ENCODE measurements at regions of chr1 and their contacts with region 1.

Region 1: DNA sequence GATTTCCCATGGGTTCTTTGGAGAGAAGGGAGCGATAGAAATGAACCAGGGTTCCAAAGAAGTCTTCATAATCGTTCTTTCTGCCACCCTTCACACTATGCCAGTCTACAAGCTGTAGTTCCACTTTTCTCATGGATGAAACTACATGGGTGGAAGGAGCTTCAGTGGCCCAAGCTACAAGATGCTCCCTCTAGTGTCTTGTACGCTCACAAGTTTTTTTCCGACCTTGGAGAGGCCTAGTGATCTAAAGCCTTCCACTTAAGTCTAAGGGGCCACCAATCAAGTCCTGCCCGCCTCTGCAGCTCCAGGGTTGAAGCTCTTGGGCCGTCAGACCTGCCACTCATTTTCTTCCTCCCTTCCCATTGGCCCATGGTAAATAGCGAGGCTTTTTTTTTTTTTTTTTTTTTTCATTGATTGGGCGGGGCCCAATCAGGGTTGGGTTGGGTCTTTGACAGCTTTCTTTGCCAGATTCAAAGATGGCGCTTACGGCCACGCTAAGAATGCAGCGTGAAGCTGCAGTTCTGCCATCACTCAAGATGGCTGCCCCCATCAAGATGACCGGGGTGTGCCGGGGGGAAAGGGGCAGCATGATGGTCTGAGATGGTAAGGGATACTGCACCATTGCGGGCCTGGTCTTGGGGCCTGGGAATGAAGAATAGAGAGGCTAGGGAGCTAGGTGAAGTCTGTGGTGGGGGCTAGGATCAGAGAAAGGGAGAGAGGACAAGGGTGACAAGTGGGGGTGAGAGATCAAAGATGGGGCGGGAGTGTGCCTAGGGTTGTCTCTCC is at the start of gene TOMM40L:
- DNase-seq: peak; percentile 90 to 94
- H3K4me3 ChIP-seq: peak within 1 kb of the TSS; percentile 12 to 66 (median 56)
- H3K27ac ChIP-seq: peak within 1 kb of the TSS in 2 of 3 donors; percentile 49 to 53
- H3K4me1 ChIP-seq: peaks cover 16 to 19% of the 10 kb centered on the region in 2 donors
- H3K27me3 ChIP-seq: no peaks in the 10 kb centered on the region
- CTCF ChIP-seq: peak in 5 of 6 experiments; percentile 12 to 55 (median 48)
- POLR2A ChIP-seq: peak in 1 of 2 donors; percentile 34
- total RNA-seq, gene TOMM40L: 7.0 to 12.4 (median 8.3) TPM

Region 2: DNA sequence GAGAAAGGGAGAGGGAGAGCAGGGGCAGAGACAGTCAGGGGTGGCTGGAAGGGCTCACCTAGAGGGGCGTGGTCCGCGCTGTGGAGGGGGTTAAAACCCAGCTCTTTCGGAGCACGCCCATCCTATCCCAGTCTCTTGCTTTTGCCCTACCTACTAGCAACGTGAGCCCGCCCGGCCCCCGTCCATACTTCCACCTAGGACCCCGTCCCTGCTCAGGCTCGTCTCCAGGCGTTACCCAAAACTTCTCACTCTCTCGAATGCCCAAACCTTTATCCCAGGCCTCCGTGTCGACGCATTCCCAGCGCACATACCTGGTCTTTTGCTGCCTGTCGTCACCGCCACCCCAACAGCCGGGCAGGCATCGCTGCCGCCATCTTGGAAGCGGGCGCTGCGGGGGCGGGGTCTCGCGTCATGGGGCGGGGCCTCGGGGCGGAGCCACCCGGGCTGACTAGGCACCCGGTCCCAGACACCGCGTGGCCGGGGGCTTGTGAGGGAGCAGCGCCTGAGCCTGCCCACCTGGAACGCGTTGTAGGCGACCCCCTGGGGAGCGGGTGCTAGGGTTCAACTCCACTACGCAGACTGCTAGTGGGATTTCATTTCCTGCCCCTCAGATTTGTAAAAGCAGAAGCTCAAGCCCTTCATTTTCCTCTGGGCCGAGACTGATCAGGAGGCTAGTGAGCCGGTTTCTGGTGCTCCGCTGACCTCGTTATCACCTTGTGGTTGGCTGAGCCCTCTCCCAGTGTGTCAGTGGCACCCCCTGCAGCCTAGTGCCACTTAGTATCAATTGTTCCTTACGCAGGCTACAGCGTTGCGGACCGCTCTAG is 48.4 kb before region 1 on chr1 and contains the start of gene B4GALT3:
- intact Hi-C with region 1: loop called (anchors 10 kb)
- DNase-seq: peak; percentile 86 to 88
- H3K4me3 ChIP-seq: peak within 1 kb of the TSS; percentile 65 to 98 (median 85)
- H3K27ac ChIP-seq: peak within 1 kb of the TSS; percentile 83 to 93 (median 91)
- H3K4me1 ChIP-seq: peaks cover 8 to 25% of the 10 kb centered on the region in 2 donors
- H3K27me3 ChIP-seq: no peaks in the 10 kb centered on the region
- CTCF ChIP-seq: peak in 2 of 6 experiments; percentile 12 to 28
- POLR2A ChIP-seq: peak; percentile 63 to 69
- total RNA-seq, gene B4GALT3: 24.1 to 34.0 (median 29.2) TPM

Region 3: DNA sequence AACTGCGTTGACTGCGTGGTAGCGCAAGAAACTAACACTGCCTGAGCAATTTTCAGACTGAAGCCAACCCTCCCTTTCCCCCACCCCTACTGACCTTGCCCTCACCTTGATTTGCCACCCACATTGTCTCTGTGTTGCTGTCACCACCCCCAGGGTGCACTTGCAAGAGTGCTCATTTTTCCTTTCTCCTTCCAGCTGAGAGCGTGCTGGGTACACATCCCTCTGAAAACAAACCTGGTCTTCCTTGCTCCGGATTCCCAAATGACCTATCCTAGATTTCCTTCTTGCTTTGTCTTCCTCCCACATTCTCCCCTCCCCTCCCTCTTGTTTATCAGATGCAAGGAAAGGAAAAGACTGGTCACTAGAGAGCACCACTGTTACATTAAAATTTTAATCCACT is 59.8 kb after region 1 on chr1:
- intact Hi-C with region 1: no loop called
- DNase-seq: no peak
- H3K4me3 ChIP-seq: no peak overlapping the region
- H3K27ac ChIP-seq: no peak overlapping the region
- H3K4me1 ChIP-seq: peaks cover 0 to 2% of the 10 kb centered on the region in 2 donors
- H3K27me3 ChIP-seq: no peaks in the 10 kb centered on the region
- CTCF ChIP-seq: no peak
- POLR2A ChIP-seq: no peak

Region 4: DNA sequence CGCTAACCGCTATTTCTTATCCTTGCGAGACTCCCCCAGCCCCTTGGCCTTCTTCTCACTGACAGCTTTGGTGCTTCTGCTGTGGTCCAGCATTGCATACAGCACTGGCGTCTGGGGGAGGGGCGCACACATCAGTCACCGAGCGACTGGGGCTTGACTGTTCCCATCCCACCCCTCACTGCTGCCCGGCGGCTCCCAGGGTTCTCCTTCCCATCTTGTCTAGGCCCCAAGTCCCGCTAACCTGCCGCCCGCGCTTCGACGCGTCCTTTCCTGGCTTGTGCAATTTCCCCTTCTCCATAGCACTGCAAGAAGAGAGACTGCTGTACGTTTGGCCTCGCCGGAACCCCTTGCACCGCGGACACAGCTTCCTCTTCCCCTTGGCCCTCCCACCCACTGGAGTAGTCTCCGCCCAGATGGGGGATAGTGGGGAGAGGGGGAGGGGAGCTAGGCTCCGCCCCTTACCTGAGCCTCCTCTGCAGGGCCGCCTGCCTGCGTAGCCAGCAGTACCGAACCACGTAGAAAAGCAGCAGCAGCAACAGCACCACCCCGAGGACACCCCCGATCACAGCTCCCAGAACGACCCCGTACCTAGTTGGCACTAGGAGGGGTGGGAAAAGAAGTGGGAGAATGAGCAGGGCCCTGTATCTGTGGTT is 80.3 kb after region 1 on chr1:
- intact Hi-C with region 1: loop called (anchors 5 kb)
- DNase-seq: peak; percentile 85 to 87
- H3K4me3 ChIP-seq: peak overlapping the region; percentile 45 to 73 (median 73)
- H3K27ac ChIP-seq: peak overlapping the region; percentile 25 to 81 (median 73)
- H3K4me1 ChIP-seq: peaks cover 15 to 20% of the 10 kb centered on the region in 2 donors
- H3K27me3 ChIP-seq: no peaks in the 10 kb centered on the region
- CTCF ChIP-seq: peak in 3 of 6 experiments; percentile 12 to 26 (median 14)
- POLR2A ChIP-seq: peak in 1 of 2 donors; percentile 67

Region 5: GRCh38 chr1:161357073-161357472 is 131.3 kb after region 1 on chr1:
- intact Hi-C with region 1: no loop called
- DNase-seq: no peak
- H3K4me3 ChIP-seq: no peak overlapping the region
- H3K27ac ChIP-seq: no peak overlapping the region
- H3K4me1 ChIP-seq: no peaks in the 10 kb centered on the region
- H3K27me3 ChIP-seq: no peaks in the 10 kb centered on the region
- CTCF ChIP-seq: no peak
- POLR2A ChIP-seq: no peak

Region 6: GRCh38 chr1:161367684-161368400 is 142.1 kb after region 1 on chr1 and contains the start of gene CFAP126:
- intact Hi-C with region 1: loop called (anchors 5 kb)
- DNase-seq: peak; percentile 73 to 78
- H3K4me3 ChIP-seq: no peak within 1 kb of the TSS
- H3K27ac ChIP-seq: peak within 1 kb of the TSS in 2 of 3 donors; percentile 15 to 36
- H3K4me1 ChIP-seq: peaks cover 0 to 8% of the 10 kb centered on the region in 2 donors
- H3K27me3 ChIP-seq: no peaks in the 10 kb centered on the region
- CTCF ChIP-seq: peak in 4 of 6 experiments; percentile 16 to 44 (median 32)
- POLR2A ChIP-seq: no peak
- total RNA-seq, gene CFAP126: not detected

Region 7: GRCh38 chr1:161382214-161383019 is 156.7 kb after region 1 on chr1:
- intact Hi-C with region 1: loop called (anchors 5 kb)
- DNase-seq: no peak
- H3K4me3 ChIP-seq: no peak overlapping the region
- H3K27ac ChIP-seq: peak overlapping the region in 1 of 3 donors; percentile 54
- H3K4me1 ChIP-seq: peaks cover 0 to 3% of the 10 kb centered on the region in 2 donors
- H3K27me3 ChIP-seq: no peaks in the 10 kb centered on the region
- CTCF ChIP-seq: peak; percentile 41 to 73 (median 58)
- POLR2A ChIP-seq: no peak